A673 (cell line): ENCODE measurements at regions of chr1 and their contacts with region 1.

Region 1: GRCh38 chr1:51897699-51898031 is 19.1 kb upstream of the NRDC start:
- DNase-seq: no peak
- H3K4me3 ChIP-seq: no peak overlapping the region
- H3K27ac ChIP-seq: peak overlapping the region; percentile 43
- H3K4me1 ChIP-seq: peaks cover 35% of the 10 kb centered on the region
- H3K27me3 ChIP-seq: no peaks in the 10 kb centered on the region
- CTCF ChIP-seq: no peak

Region 2: DNA sequence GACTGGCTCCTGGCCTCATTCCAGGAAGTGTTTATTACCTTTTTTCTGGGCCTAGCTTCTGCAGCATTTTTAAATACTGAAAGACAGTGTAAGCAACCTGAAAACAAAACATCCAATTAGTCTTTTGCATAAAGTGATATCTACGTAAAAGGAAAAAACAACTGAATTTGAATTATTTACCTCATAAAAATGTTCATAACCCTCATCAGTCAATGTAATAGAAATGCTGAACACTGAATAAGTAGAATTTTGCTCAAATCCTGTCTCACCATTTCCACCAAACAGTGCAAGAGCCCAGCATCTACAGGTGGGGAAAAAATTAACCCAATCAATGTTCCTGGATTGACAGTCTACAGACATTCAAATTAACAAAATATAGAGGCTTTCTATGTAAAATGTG is 83.2 kb before region 1 on chr1:
- CTCF ChIA-PET with region 1: no interaction called
- POLR2A ChIA-PET with region 1: no interaction called
- intact Hi-C with region 1: no loop called
- DNase-seq: no peak
- H3K4me3 ChIP-seq: no peak overlapping the region
- H3K27ac ChIP-seq: peak overlapping the region; percentile 31
- H3K4me1 ChIP-seq: no peaks in the 10 kb centered on the region
- H3K27me3 ChIP-seq: no peaks in the 10 kb centered on the region
- CTCF ChIP-seq: no peak

Region 3: DNA sequence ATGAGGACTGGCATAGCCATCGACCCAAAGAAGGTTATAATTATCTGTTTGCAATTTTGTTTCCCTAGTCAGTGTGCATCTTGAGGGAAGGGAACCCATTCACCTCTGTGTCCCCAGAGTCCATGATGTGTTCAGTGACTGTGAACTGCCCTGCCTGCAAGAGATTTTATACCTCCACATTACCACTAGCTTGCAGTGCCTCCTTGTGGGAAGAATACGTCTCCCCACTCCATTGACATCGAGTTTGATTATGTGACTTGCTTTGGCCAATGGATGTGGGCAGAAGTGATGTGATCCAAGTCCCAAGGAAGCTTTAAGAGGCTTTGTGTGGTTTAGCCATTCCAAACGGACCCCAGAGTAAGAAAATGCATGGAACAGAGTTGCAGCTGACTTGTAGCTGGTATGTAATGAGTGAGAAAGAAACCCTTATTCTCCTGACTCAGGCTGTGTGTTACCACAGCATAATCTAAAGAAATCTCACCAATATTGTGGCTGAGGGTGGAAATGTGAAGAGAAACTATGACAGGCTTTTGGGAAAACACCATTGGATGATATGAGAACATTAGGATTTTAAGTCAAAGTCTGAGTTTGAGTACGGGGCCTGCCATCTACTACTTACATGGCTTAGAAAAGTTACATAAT is 28.6 kb after region 1 on chr1:
- CTCF ChIA-PET with region 1: interaction called, 8 read pairs
- POLR2A ChIA-PET with region 1: no interaction called
- intact Hi-C with region 1: loop called (anchors 1 kb)
- DNase-seq: peak; percentile 82
- H3K4me3 ChIP-seq: no peak overlapping the region
- H3K27ac ChIP-seq: no peak overlapping the region
- H3K4me1 ChIP-seq: peaks cover 16% of the 10 kb centered on the region
- H3K27me3 ChIP-seq: no peaks in the 10 kb centered on the region
- CTCF ChIP-seq: peak; percentile 78

Region 4: DNA sequence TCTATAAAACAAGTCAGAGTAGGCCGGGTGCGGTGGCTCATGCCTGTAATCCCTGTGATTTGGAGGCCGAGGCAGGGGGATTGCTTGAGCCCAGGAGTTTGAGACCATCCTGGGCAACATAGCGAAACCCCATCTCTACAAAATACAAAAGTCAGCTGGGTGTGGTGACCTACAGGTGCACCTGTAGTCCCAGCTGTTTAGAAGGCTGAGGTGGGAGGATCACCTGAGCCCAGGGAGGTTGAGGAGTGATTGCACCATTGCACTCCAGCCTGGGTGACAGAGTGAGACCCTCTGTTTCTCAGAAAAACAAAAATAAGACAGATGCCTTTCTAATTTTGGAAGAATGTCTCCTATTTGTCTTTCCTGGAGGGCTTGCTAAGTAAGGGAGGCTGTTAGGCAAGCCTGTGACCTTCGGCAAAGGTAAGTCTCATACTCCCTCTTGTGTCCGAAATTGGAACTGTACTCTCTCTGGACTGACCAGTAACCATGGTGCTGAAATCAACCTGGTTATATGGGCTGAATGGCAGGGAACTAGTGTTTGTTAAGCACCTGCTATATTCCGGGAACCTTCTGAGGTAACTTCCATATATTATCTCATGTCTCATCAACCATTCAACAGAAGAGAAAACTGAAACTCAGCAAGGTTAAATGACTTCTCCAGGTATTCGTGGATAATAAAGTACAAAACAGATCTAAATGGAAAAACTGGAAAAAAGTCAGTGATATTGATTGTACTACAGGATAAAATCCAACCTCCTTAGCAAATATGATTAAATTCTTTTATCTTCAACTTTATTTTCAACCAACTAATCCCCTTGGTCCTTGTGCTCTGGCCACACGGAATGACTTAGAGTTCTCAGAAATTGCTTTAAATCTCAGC is 104.6 kb after region 1 on chr1:
- CTCF ChIA-PET with region 1: interaction called, 7 read pairs
- POLR2A ChIA-PET with region 1: no interaction called
- intact Hi-C with region 1: loop called (anchors 1 kb)
- DNase-seq: peak; percentile 92
- H3K4me3 ChIP-seq: no peak overlapping the region
- H3K27ac ChIP-seq: no peak overlapping the region
- H3K4me1 ChIP-seq: peaks cover 21% of the 10 kb centered on the region
- H3K27me3 ChIP-seq: no peaks in the 10 kb centered on the region
- CTCF ChIP-seq: peak; percentile 91